Calu3 (cell line): ENCODE measurements at regions of chr5 and their contacts with region 1.

Region 1: DNA sequence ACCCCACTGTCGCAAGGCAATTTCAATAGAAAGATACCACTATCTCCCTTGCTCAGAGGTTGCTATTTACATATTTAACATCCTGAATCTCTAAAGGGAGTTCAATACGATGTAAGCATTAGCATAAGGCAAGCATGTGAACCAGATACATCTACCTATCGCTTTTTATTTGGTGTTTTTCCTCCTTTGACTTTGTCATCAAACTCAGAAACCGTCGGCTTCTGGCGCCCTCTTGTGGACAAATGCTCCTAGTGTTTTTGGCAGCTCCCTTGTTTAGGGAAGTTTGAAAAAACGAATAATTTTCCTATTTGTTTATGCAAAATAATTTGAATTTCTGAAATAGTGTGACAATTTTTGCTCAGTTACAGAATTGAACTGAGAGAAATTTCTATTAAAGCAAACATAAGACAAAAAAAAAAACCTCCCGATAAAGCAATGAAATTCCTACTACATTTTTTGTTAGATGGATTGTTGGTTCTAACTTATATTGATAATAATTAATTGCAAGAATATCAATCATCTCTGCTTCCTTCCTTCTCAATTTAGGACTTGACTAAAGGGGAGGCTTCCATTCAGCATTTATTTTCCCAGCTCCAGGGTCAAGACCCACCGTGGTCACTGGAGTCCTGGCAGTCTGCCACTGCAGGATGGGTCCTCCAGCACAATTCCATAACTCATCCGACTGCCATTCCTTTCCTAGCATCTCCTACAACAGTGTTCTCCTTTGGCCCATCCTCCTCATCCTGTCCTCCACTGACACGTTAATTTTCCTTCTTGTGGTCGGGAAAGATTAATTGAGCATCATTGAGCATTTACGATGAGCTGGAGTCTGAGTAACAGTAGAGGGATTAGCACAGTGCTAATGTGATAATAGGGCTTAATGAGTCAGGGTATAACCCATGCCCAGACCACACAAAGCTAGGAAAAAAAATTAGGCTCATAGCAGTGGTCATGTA is 131.8 kb upstream of the CHD1 start:
- DNase-seq: peak; percentile 87
- H3K4me3 Mint-ChIP-seq: no peak overlapping the region
- H3K27ac Mint-ChIP-seq: no peak overlapping the region
- H3K4me1 Mint-ChIP-seq: peaks cover 18% of the 10 kb centered on the region
- H3K27me3 Mint-ChIP-seq: no peaks in the 10 kb centered on the region
- CTCF ChIP-seq: peak; percentile 92

Region 2: GRCh38 chr5:98839469-98840383 is 220.9 kb before region 1 on chr5:
- CTCF ChIA-PET with region 1: no interaction called
- intact Hi-C with region 1: loop called (anchors 5 kb)
- DNase-seq: no peak
- H3K4me3 Mint-ChIP-seq: no peak overlapping the region
- H3K27ac Mint-ChIP-seq: no peak overlapping the region
- H3K4me1 Mint-ChIP-seq: no peaks in the 10 kb centered on the region
- H3K27me3 Mint-ChIP-seq: no peaks in the 10 kb centered on the region
- CTCF ChIP-seq: no peak

Region 3: GRCh38 chr5:98880151-98880550 is 180.4 kb before region 1 on chr5:
- CTCF ChIA-PET with region 1: interaction called, 8 read pairs
- intact Hi-C with region 1: loop called (anchors 1 kb)
- DNase-seq: peak; percentile 46
- H3K4me3 Mint-ChIP-seq: no peak overlapping the region
- H3K27ac Mint-ChIP-seq: peak overlapping the region; percentile 6
- H3K4me1 Mint-ChIP-seq: peaks cover 59% of the 10 kb centered on the region
- H3K27me3 Mint-ChIP-seq: no peaks in the 10 kb centered on the region
- CTCF ChIP-seq: no peak

Region 4: GRCh38 chr5:98905857-98906690 is 154.5 kb before region 1 on chr5:
- CTCF ChIA-PET with region 1: interaction called, 5 read pairs
- intact Hi-C with region 1: loop called (anchors 1 kb)
- DNase-seq: no peak
- H3K4me3 Mint-ChIP-seq: peak overlapping the region; percentile 27
- H3K27ac Mint-ChIP-seq: peak overlapping the region; percentile 76
- H3K4me1 Mint-ChIP-seq: peaks cover 55% of the 10 kb centered on the region
- H3K27me3 Mint-ChIP-seq: no peaks in the 10 kb centered on the region
- CTCF ChIP-seq: peak; percentile 72

Region 5: GRCh38 chr5:99032234-99033013 is 28.2 kb before region 1 on chr5:
- CTCF ChIA-PET with region 1: interaction called, 3 read pairs
- intact Hi-C with region 1: loop called (anchors 1 kb)
- DNase-seq: peak; percentile 80
- H3K4me3 Mint-ChIP-seq: peak overlapping the region; percentile 62
- H3K27ac Mint-ChIP-seq: peak overlapping the region; percentile 64
- H3K4me1 Mint-ChIP-seq: peaks cover 50% of the 10 kb centered on the region
- H3K27me3 Mint-ChIP-seq: no peaks in the 10 kb centered on the region
- CTCF ChIP-seq: peak; percentile 81

Region 6: DNA sequence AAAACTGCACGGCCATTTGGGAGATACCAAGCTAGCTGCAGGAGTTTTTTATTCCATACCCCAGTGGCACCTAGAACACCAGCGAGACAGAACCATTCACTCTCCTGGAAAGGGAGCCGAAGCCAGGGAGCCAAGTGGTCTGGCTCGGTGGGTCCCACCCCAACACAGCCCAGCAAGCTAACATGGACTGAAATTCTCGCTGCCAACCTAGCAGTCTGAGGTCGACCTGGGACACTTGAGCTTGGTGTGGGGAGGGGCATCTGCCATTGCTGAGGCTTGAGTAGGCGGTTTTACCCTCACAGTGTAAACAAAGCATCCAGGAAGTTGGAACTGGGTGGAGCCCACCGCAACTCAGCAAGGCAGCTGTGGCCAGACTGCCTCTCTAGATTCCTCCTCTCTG is 22.9 kb before region 1 on chr5:
- CTCF ChIA-PET with region 1: interaction called, 3 read pairs
- intact Hi-C with region 1: loop called (anchors 1 kb)
- DNase-seq: peak; percentile 78
- H3K4me3 Mint-ChIP-seq: no peak overlapping the region
- H3K27ac Mint-ChIP-seq: no peak overlapping the region
- H3K4me1 Mint-ChIP-seq: peaks cover 38% of the 10 kb centered on the region
- H3K27me3 Mint-ChIP-seq: no peaks in the 10 kb centered on the region
- CTCF ChIP-seq: no peak